Spleen (tissue), 13 donors: ENCODE measurements at regions of chr2 and their contacts with region 1.

Region 1: DNA sequence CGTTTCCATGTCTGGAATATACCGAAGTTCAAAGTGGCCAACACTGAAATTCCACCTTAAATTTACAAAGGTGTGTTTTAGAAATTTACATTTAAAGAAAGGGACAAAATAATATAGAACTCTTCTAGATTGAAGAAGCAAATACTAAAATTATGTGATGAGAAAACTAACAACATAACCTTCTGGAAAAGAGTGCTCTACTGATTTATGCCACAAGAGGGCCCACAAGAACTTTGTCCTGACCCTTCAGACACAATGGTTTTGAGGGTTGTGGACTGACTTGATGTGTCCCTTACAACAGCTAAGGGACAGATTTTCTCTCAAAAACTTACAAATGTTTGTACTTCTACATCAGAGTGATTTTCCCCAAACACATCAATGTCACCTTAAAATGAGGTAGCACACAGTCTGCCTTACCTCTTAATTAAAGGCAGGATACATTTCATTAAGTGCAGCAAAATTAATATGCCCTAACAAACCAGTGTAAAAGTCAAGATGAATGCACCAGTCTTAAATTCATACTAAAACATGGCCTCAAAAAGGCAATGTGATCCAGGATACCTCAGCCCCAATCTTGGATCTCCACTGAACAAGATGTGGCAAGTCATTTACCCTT is 36.2 kb downstream of the EIF2AK3 start:
- DNase-seq: no peak
- H3K4me3 ChIP-seq: no peak overlapping the region
- H3K27ac ChIP-seq: no peak overlapping the region
- H3K4me1 ChIP-seq: peaks cover 0 to 4% (median 0%) of the 10 kb centered on the region in 6 donors
- H3K27me3 ChIP-seq: no peaks in the 10 kb centered on the region
- CTCF ChIP-seq: peak; percentile 55 to 79 (median 70)
- POLR2A ChIP-seq: no peak

Region 2: DNA sequence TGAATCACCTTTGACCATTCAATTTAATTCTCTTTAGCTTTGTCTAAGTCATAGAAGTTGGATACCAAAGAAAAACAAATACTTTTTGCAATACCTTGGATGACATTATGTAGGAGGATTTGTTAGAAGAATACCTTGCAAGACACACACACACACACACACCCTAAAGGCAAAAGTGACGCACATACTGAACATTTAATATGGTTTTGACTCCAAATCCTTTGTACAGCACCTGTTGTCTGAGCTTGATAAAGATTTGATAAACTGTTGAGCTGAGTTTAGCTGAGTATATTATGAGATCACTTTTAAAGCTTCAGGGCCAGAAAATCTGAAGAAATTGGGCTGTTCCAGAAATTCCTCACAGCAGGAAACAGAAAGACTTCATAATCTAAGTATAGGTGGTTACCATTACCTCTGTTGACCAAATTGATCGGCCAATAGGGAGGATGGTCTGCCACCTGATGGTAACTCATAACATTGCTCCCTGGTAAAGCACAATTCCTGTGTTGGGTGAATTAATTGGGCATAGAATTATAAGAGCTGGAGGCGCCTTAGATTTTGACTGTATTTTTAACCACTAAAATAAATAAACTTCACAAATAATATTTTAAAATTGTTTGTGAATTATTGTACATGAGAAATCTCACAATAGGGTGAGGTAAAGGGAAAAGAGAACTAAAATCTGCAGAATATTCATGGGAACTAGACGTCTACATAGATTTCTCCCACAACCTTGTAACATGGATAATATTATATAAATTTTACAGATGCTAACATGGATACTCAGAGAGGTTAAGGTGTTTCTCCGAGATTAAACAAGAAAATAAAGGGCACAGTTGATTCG is 78.5 kb after region 1 on chr2:
- intact Hi-C with region 1: loop called (anchors 5 kb)
- DNase-seq: no peak
- H3K4me3 ChIP-seq: no peak overlapping the region
- H3K27ac ChIP-seq: no peak overlapping the region
- H3K4me1 ChIP-seq: peaks cover 0 to 8% (median 3%) of the 10 kb centered on the region in 6 donors
- H3K27me3 ChIP-seq: no peaks in the 10 kb centered on the region
- CTCF ChIP-seq: peak; percentile 37 to 74 (median 61)
- POLR2A ChIP-seq: no peak